ENCODE measurements at regions of chr16 and their contacts with region 1.

Region 1: DNA sequence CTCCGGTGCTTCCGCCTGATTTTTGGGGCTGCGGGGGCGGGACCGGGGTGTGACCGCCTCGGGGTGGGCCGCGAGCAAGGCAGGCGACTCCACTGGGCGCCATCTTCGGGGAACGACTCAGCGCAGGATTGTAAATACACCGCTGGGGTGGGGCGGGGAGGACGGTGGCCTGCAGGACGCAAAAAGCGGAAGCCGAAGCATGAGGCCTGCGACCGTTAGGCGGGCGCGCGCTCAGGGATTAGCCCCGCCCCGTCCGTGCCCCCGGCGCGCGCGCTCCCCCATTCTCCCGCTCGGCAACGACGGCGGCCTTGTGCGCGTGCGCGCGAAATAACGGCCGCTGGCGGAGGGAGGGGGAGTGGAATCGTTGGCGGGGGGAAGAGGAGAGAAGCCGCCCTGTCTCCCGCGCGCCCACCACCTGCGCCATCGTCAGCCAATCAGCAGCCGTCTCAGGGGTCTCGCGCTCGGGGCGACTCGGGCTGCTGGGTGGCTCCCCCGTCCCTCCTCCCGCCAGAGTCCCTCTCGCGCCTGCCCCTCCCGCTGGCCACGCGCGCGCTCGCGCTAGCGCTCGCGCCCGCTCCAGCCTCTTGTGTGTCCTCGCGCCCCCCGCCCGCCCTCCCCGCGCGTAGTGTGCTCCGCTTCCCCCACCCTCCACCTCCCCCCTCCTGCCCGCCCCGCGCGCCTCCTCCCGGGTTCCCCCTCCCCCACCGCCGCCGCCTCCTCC is 791 bp upstream of the MAZ start:
- DNase-seq: peak; percentile 97
- H3K4me3 Mint-ChIP-seq: peak overlapping the region; percentile 100
- H3K27ac Mint-ChIP-seq: peak overlapping the region; percentile 100
- H3K4me1 Mint-ChIP-seq: peaks cover 31% of the 10 kb centered on the region
- H3K27me3 Mint-ChIP-seq: no peaks in the 10 kb centered on the region

Region 2: GRCh38 chr16:29664091-29664921 is 141.2 kb before region 1 on chr16:
- intact Hi-C with region 1: no loop called
- DNase-seq: peak; percentile 28
- H3K4me3 Mint-ChIP-seq: peak overlapping the region; percentile 94
- H3K27ac Mint-ChIP-seq: peak overlapping the region; percentile 93
- H3K4me1 Mint-ChIP-seq: peaks cover 40% of the 10 kb centered on the region
- H3K27me3 Mint-ChIP-seq: no peaks in the 10 kb centered on the region

Region 3: GRCh38 chr16:29700253-29700987 is 105.1 kb before region 1 on chr16:
- intact Hi-C with region 1: loop called (anchors 5 kb)
- DNase-seq: peak; percentile 64
- H3K4me3 Mint-ChIP-seq: peak overlapping the region; percentile 2
- H3K27ac Mint-ChIP-seq: peak overlapping the region; percentile 86
- H3K4me1 Mint-ChIP-seq: peaks cover 29% of the 10 kb centered on the region
- H3K27me3 Mint-ChIP-seq: no peaks in the 10 kb centered on the region

Region 4: GRCh38 chr16:29790183-29790952 is 15.2 kb before region 1 on chr16 and contains the start of gene KIF22:
- intact Hi-C with region 1: loop called (anchors 1 kb)
- DNase-seq: peak; percentile 100
- H3K4me3 Mint-ChIP-seq: peak within 1 kb of the TSS; percentile 98
- H3K27ac Mint-ChIP-seq: peak within 1 kb of the TSS; percentile 93
- H3K4me1 Mint-ChIP-seq: peaks cover 46% of the 10 kb centered on the region
- H3K27me3 Mint-ChIP-seq: no peaks in the 10 kb centered on the region
- total RNA-seq, gene KIF22: 132 and 136 TPM in 2 replicates

Region 5: DNA sequence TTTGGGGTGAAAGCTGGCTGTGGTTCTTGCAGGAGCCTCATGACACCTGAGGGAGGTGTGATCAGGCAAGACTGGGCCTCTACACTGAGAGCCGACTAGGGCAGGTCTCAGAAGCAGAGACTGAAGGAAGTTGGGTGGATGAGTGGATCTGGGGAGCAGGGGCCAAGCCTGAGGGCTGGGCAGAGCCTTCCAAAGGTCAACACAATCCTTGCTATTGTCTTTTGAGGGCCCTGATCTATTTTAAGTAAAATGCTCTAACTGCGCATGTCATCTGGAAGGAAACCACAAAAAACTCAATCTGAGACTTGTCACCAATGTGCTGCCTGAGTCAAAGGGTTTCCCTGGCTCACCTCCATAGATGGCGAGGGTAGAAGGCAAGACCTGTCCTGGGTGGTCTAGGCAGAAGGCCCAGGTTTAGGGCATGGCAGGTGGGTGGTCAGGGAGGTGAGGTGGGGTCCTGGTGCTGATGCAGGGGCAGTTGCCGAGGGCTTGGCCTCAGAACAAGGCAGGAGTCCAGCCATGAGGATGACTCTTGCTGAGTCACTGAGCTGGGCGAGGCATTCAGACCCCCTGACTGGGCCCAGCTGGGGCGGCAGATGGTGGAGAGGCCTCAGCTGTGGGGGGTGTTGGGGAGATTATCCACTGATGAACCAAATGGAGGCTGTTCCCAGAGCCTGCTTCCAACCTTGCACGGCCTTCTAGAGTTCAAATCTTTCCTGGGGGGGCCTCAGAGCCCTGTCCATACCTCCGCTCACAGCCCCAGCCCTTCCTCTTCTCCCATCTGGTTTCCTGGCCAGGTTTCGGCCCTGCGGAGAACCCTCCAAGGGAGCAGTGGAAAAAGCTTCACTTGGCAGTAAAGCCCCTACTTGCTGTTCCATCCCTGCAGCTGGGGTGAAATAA is 19.9 kb after region 1 on chr16:
- intact Hi-C with region 1: loop called (anchors 1 kb)
- DNase-seq: no peak
- H3K4me3 Mint-ChIP-seq: peak overlapping the region; percentile 57
- H3K27ac Mint-ChIP-seq: peak overlapping the region; percentile 86
- H3K4me1 Mint-ChIP-seq: peaks cover 37% of the 10 kb centered on the region
- H3K27me3 Mint-ChIP-seq: no peaks in the 10 kb centered on the region

Region 6: GRCh38 chr16:29848420-29849297 is 43.1 kb after region 1 on chr16:
- intact Hi-C with region 1: no loop called
- DNase-seq: peak; percentile 68
- H3K4me3 Mint-ChIP-seq: no peak overlapping the region
- H3K27ac Mint-ChIP-seq: no peak overlapping the region
- H3K4me1 Mint-ChIP-seq: peaks cover 5% of the 10 kb centered on the region
- H3K27me3 Mint-ChIP-seq: no peaks in the 10 kb centered on the region

Region 7: GRCh38 chr16:29926005-29926710 is 120.6 kb after region 1 on chr16 and contains the start of gene KCTD13:
- intact Hi-C with region 1: loop called (anchors 2 kb)
- DNase-seq: peak; percentile 91
- H3K4me3 Mint-ChIP-seq: peak within 1 kb of the TSS; percentile 95
- H3K27ac Mint-ChIP-seq: peak within 1 kb of the TSS; percentile 94
- H3K4me1 Mint-ChIP-seq: peaks cover 32% of the 10 kb centered on the region
- H3K27me3 Mint-ChIP-seq: no peaks in the 10 kb centered on the region
- total RNA-seq, gene KCTD13: 39.7 and 47.5 TPM in 2 replicates

Region 8: DNA sequence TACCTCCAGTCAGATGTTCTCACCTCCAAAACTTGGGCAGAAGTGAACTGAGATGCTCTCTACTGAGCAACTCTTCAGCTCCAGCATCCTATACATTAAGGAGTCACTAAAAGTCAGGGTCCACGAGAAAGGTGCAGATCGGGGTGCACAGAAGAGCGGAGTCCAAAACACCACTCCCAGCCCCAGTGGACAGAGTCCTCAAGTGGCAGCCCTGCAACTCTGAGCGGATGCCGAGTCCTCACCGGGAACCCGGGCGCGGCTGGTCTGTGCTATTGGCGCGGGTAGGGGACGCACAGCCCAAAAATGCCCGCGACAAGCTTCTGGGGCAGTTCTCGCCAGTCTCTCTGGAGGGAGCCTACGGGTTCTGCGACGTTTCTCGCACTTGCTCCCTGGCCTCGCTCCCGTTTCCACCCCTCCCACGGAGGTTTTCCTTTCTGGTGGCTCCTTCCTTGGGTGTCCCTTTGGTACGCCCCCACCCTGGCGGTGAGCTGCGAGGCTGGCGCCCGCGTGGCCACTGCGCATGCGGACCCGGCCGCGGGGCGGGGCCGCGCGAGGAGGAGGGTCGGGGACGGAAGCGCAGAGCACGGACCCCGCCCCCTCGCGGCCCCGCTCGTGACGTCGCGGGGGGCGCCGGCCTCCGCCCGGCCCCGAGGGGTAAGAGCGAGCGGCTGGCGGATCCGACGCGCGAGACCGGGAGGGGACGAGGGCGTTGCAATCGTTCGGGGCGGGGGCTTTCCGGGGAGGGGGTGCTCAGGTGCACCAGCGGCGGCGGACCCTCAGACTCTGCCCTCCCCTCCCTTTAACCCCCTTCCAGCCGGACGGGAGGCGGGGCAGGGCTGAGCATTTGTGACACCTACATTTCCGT is 156.2 kb after region 1 on chr16 and contains the start of gene TMEM219:
- intact Hi-C with region 1: no loop called
- DNase-seq: peak; percentile 93
- H3K4me3 Mint-ChIP-seq: peak within 1 kb of the TSS; percentile 85
- H3K27ac Mint-ChIP-seq: peak within 1 kb of the TSS; percentile 69
- H3K4me1 Mint-ChIP-seq: peaks cover 20% of the 10 kb centered on the region
- H3K27me3 Mint-ChIP-seq: no peaks in the 10 kb centered on the region
- total RNA-seq, gene TMEM219: 52.1 and 59.0 TPM in 2 replicates

Region 9: DNA sequence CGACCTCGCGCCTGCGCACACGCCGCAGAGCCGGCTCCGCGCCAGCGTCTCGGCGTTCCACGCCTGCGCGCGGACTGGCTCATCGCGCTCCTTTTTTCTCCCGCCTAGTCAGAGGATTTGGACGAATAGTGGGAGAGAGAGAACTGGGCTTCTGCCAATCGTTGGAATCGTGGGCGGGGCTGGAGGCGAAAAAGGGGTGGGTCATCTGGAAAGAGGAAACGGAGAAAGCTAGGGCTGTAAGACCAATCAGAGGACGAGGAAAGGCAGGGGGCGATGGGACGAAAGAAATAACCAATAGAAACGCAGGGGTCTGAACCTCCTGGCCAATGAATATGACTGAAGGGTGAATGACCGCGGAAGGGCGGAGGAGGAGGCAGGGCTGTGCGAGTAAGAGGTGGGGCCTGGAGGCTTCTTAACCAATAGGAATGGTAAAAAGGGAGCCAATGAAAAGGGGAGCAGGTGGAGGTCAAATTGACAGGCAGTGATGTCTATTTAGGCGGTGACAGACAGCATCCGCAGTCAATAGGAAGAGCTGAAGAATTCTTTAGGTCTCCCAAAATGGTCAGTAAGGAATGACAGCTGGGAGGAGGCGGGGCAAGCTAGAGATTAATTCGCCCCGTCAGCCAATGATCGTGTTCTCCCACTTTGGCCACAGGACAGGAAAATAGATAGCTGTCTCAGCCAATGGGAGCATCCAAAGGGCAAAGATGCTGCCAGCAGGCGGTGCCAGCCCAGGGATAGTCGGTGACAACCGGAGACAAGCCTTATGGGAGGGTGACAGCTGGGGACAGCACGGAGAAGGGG is 565.1 kb after region 1 on chr16 and contains the start of gene TBC1D10B:
- intact Hi-C with region 1: loop called (anchors 10 kb)
- DNase-seq: peak; percentile 100
- H3K4me3 Mint-ChIP-seq: peak within 1 kb of the TSS; percentile 87
- H3K27ac Mint-ChIP-seq: peak within 1 kb of the TSS; percentile 91
- H3K4me1 Mint-ChIP-seq: peaks cover 40% of the 10 kb centered on the region
- H3K27me3 Mint-ChIP-seq: no peaks in the 10 kb centered on the region
- total RNA-seq, gene TBC1D10B: 63.4 and 64.4 TPM in 2 replicates